ENCODE measurements at regions of chr1 and their contacts with region 1.

Region 1: GRCh38 chr1:41662061-41662764 is 177.7 kb upstream of the EDN2 start:
- DNase-seq: peak; percentile 86
- ATAC-seq: peak; percentile 78
- H3K4me3 ChIP-seq: peak overlapping the region in 4 of 5 experiments; percentile 43 to 88 (median 67)
- H3K4me3 Mint-ChIP-seq: peak overlapping the region; percentile 70
- H3K27ac ChIP-seq: peak overlapping the region; percentile 69 to 87
- H3K27ac Mint-ChIP-seq: peak overlapping the region; percentile 80
- H3K4me1 ChIP-seq: peaks cover 44 to 79% of the 10 kb centered on the region in 2 donors
- H3K4me1 Mint-ChIP-seq: peaks cover 79% of the 10 kb centered on the region
- H3K27me3 ChIP-seq: no peaks in the 10 kb centered on the region
- H3K27me3 Mint-ChIP-seq: no peaks in the 10 kb centered on the region
- CTCF ChIP-seq: no peak

Region 2: GRCh38 chr1:41673378-41673777 is 11.2 kb after region 1 on chr1:
- CTCF ChIA-PET with region 1: interaction called, 9 read pairs
- POLR2A ChIA-PET with region 1: interaction called, 4 read pairs
- intact Hi-C with region 1: loop called (anchors 1 kb)
- DNase-seq: peak; percentile 73
- ATAC-seq: peak; percentile 85
- H3K4me3 ChIP-seq: peak overlapping the region in 3 of 5 experiments; percentile 36 to 53 (median 39)
- H3K4me3 Mint-ChIP-seq: peak overlapping the region; percentile 86
- H3K27ac ChIP-seq: peak overlapping the region; percentile 75 to 81
- H3K27ac Mint-ChIP-seq: peak overlapping the region; percentile 86
- H3K4me1 ChIP-seq: peaks cover 42 to 70% of the 10 kb centered on the region in 2 donors
- H3K4me1 Mint-ChIP-seq: peaks cover 82% of the 10 kb centered on the region
- H3K27me3 ChIP-seq: no peaks in the 10 kb centered on the region
- H3K27me3 Mint-ChIP-seq: no peaks in the 10 kb centered on the region
- CTCF ChIP-seq: no peak

Region 3: GRCh38 chr1:41698916-41699860 is 37.0 kb after region 1 on chr1:
- CTCF ChIA-PET with region 1: no interaction called
- POLR2A ChIA-PET with region 1: no interaction called
- intact Hi-C with region 1: no loop called
- DNase-seq: peak; percentile 48
- ATAC-seq: peak; percentile 94
- H3K4me3 ChIP-seq: no peak overlapping the region
- H3K4me3 Mint-ChIP-seq: no peak overlapping the region
- H3K27ac ChIP-seq: no peak overlapping the region
- H3K27ac Mint-ChIP-seq: peak overlapping the region; percentile 47
- H3K4me1 ChIP-seq: peaks cover 6 to 12% of the 10 kb centered on the region in 2 donors
- H3K4me1 Mint-ChIP-seq: peaks cover 18% of the 10 kb centered on the region
- H3K27me3 ChIP-seq: no peaks in the 10 kb centered on the region
- H3K27me3 Mint-ChIP-seq: no peaks in the 10 kb centered on the region
- CTCF ChIP-seq: no peak

Region 4: GRCh38 chr1:41751804-41752513 is 89.7 kb after region 1 on chr1:
- CTCF ChIA-PET with region 1: interaction called, 4 read pairs
- POLR2A ChIA-PET with region 1: no interaction called
- intact Hi-C with region 1: loop called (anchors 1 kb)
- DNase-seq: peak; percentile 72
- ATAC-seq: peak; percentile 24
- H3K4me3 ChIP-seq: peak overlapping the region in 1 of 5 experiments; percentile 40
- H3K4me3 Mint-ChIP-seq: peak overlapping the region; percentile 70
- H3K27ac ChIP-seq: peak overlapping the region; percentile 72 to 81
- H3K27ac Mint-ChIP-seq: peak overlapping the region; percentile 95
- H3K4me1 ChIP-seq: peaks cover 48 to 64% of the 10 kb centered on the region in 2 donors
- H3K4me1 Mint-ChIP-seq: peaks cover 60% of the 10 kb centered on the region
- H3K27me3 ChIP-seq: no peaks in the 10 kb centered on the region
- H3K27me3 Mint-ChIP-seq: no peaks in the 10 kb centered on the region
- CTCF ChIP-seq: no peak

Region 5: DNA sequence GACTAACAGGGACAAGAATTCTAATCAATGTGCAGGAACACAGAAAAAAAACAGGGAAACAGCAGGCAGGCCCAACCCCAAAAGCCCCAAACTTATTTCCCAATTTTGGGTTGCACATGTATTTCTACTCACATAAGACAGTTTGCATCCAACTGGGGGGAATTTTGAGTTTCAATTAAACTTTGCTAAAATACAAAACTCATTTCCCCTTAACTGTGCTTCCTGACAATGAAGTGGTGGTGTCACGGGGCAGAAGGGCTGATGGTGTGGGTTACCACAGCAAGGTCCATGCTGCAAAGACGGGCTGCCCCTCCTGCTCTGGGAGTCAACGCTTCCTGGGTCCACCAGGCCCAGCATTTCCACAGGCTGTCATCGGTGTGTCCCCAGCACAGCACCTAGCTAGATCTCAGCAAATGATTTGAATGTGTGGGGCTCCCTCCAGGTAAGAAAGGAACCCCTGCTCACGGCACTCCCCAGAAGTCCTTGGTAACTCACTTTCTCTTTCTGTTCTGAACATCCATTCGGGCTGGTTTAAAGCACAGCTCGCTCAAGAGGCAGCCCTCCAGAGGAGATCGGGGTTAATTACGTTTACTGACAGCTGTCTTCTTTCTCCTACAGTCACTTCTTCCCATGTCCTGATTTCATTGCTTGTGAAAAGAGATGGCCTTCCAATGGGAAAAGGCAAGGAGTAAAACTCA is 229.1 kb after region 1 on chr1:
- CTCF ChIA-PET with region 1: no interaction called
- POLR2A ChIA-PET with region 1: no interaction called
- intact Hi-C with region 1: loop called (anchors 10 kb)
- DNase-seq: peak; percentile 86
- ATAC-seq: peak; percentile 96
- H3K4me3 ChIP-seq: peak overlapping the region; percentile 8 to 70 (median 52)
- H3K4me3 Mint-ChIP-seq: peak overlapping the region; percentile 84
- H3K27ac ChIP-seq: peak overlapping the region; percentile 72 to 80
- H3K27ac Mint-ChIP-seq: peak overlapping the region; percentile 83
- H3K4me1 ChIP-seq: peaks cover 13 to 23% of the 10 kb centered on the region in 2 donors
- H3K4me1 Mint-ChIP-seq: peaks cover 16% of the 10 kb centered on the region
- H3K27me3 ChIP-seq: no peaks in the 10 kb centered on the region
- H3K27me3 Mint-ChIP-seq: no peaks in the 10 kb centered on the region
- CTCF ChIP-seq: peak; percentile 51